ENCODE measurements at regions of chr1 and their contacts with region 1.

Region 1: GRCh38 chr1:177274687-177275211 is 104.0 kb downstream of the BRINP2 start:
- DNase-seq: peak; percentile 87
- H3K4me3 ChIP-seq: no peak overlapping the region
- H3K27ac ChIP-seq: peak overlapping the region; percentile 69 to 75 (median 73)
- H3K4me1 ChIP-seq: peaks cover 22 to 49% (median 44%) of the 10 kb centered on the region in 4 donors
- H3K27me3 ChIP-seq: no peaks in the 10 kb centered on the region
- CTCF ChIP-seq: no peak
- EP300 ChIP-seq: no peak
- POLR2A ChIP-seq: no peak

Region 2: DNA sequence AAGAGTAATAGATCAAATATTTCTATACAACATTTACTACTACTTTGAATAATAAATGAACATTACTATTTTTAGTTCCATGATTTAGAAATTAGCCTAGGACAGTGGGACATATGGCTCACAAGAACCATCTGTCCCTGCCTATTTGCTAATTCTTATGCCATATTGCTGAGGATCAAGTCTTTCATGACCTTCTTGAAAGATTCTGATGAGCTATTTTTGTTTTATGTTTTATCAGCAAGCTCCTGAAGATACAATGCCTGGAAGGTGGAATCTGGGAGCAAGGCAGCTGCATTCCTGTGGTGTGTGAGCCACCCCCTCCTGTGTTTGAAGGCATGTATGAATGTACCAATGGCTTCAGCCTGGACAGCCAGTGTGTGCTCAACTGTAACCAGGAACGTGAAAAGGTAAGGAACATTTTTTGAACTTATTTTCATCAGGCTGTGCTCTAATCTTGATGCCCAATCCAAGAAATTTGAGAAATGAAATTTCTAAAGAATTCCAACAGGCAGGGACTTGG is 485.1 kb before region 1 on chr1:
- intact Hi-C with region 1: no loop called
- DNase-seq: no peak
- H3K4me3 ChIP-seq: no peak overlapping the region
- H3K27ac ChIP-seq: no peak overlapping the region
- H3K4me1 ChIP-seq: peaks cover 0 to 6% (median 0%) of the 10 kb centered on the region in 4 donors
- H3K27me3 ChIP-seq: no peaks in the 10 kb centered on the region
- CTCF ChIP-seq: no peak
- EP300 ChIP-seq: no peak
- POLR2A ChIP-seq: no peak

Region 3: DNA sequence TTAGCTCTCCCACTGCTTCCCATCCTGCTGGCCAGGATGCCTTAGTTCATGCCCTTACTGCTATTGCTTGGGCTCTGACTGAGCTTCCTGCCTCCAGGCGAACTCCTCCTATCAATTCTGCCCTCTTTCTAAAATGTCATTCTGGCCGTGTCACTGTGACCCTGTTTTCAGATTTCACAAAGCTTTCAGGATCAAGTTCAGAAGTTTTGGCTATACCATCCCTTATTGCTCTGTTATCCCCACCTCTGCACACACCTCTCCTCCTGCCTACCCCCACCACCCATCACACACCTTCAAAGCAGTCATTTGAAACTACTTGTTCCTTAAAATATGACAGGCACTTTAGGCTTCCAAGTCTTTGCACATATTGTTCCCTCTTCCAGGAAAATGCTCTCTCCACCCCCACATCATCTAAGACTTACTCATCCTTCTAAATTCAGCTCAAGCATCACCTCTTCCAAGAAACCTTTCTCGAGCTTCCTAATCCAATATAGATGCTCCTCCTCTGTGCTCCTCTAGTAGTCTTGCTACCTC is 174.1 kb after region 1 on chr1:
- intact Hi-C with region 1: loop called (anchors 10 kb)
- DNase-seq: no peak
- H3K4me3 ChIP-seq: no peak overlapping the region
- H3K27ac ChIP-seq: no peak overlapping the region
- H3K4me1 ChIP-seq: peaks cover 0 to 35% (median 21%) of the 10 kb centered on the region in 4 donors
- H3K27me3 ChIP-seq: no peaks in the 10 kb centered on the region
- CTCF ChIP-seq: no peak
- EP300 ChIP-seq: peak; percentile 57
- POLR2A ChIP-seq: no peak